Sciatic nerve (tissue), 2 donors: ENCODE measurements at regions of chr15 and their contacts with region 1.

Region 1: GRCh38 chr15:69576035-69576526 is 123.5 kb downstream of the RPLP1 start:
- DNase-seq: peak; percentile 77
- ATAC-seq: peak; percentile 84

Region 2: DNA sequence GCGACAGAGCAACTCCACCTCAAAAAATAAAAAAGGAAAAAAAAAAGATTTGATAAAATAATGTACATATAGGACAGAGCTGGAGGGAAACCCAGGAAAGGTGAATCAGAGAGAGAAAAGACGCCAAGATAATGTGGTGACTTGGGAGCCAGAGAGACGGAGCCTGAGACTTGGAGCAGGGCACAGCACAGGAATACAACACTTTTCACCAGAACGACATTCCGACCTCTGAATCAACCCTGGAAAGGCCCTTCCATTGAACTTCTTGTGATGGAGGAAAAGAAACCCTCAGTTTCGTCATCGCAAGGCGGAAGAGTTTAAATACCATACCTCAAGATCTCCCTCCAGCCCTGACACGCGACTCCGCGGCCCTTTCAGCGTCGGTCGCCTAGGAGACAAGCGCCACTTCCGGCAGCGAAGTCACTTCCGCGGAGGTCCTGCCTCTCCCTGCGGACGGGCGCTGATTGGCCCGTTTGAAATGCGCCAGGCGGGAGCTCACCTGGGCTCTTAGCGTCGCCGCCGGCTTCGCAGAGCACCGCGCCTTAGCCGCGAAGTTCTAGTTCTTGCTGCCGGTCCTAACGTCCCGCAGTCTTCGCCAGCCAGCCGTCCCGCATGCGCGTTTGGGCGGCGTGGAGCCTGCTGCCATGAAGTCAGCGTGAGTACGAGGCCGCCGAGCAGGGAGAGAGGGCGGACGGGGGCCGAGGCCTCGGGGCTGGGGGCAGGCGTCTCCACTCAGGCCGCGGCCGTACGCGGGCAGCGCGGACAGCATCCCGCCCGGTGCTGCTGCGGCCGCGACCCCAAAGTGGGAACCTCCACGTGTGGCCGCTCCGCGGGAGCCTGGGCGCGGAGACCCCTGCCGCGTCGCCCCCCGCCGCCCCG is 162.0 kb before region 1 on chr15 and contains the start of gene KIF23:
- intact Hi-C with region 1: no loop called
- DNase-seq: peak; percentile 91
- ATAC-seq: peak; percentile 99
- total RNA-seq, gene KIF23: 11.8 TPM

Region 3: DNA sequence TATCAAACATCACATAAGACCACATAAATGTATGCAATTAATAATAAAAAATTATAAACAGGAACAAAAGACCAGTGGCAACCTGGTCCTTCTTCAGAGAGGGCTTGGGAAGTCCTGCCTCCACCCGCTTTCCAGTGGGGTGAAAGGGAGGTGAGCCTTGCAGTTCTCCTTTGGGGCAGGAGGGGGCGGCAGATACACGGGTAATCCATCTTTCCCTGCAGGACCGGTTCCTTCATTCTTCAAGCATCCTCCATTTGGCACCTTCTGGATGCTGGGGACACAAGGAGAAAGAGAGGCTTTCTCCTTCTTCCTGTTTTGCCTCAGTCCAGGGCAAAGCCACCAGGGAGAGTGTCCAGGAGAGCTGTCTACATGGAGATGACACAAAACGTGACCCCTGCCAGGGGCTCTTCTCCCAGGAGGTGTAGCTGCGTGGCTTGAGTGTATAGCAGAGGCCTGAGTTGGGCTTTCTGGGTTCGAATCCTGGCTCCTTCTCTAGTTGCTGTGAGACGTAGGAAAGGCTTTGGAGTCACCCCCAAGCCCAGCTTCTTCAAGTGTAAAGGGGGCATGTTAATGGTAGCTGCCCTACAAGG is 100.2 kb before region 1 on chr15:
- intact Hi-C with region 1: no loop called
- DNase-seq: peak; percentile 93
- ATAC-seq: peak; percentile 90

Region 4: DNA sequence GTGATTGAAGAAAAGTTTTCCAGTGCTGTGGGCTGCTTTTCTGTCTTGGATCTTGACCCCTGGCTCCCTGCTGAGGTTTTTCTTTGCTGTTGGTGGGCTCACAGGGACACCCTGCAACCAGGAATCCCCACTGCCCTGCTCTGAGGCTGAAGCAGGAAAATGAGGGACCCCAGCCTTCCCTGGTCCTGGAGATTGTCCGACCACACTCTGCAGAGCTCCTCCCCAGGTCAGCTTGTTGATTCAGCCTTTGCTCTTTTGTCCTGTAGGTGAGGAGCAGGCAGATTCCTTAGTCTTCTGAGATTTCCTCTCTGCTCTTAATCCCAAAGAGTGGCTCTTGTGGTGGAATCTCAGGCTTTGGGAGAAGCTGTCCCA is 71.0 kb after region 1 on chr15:
- intact Hi-C with region 1: no loop called
- DNase-seq: peak; percentile 8
- ATAC-seq: no peak

Region 5: GRCh38 chr15:70474471-70475396 is 898.7 kb after region 1 on chr15:
- intact Hi-C with region 1: loop called (anchors 10 kb)
- DNase-seq: peak; percentile 89
- ATAC-seq: peak; percentile 91